ENCODE measurements at regions of chr3 and their contacts with region 1.

Region 1: GRCh38 chr3:118884748-118885206 is 149.9 kb downstream of the IGSF11 start:
- DNase-seq: peak; percentile 71
- H3K4me3 Mint-ChIP-seq: no peak overlapping the region
- H3K27ac Mint-ChIP-seq: no peak overlapping the region
- H3K4me1 Mint-ChIP-seq: no peaks in the 10 kb centered on the region
- H3K27me3 Mint-ChIP-seq: peaks cover 61% of the 10 kb centered on the region
- CTCF ChIP-seq: peak; percentile 92

Region 2: DNA sequence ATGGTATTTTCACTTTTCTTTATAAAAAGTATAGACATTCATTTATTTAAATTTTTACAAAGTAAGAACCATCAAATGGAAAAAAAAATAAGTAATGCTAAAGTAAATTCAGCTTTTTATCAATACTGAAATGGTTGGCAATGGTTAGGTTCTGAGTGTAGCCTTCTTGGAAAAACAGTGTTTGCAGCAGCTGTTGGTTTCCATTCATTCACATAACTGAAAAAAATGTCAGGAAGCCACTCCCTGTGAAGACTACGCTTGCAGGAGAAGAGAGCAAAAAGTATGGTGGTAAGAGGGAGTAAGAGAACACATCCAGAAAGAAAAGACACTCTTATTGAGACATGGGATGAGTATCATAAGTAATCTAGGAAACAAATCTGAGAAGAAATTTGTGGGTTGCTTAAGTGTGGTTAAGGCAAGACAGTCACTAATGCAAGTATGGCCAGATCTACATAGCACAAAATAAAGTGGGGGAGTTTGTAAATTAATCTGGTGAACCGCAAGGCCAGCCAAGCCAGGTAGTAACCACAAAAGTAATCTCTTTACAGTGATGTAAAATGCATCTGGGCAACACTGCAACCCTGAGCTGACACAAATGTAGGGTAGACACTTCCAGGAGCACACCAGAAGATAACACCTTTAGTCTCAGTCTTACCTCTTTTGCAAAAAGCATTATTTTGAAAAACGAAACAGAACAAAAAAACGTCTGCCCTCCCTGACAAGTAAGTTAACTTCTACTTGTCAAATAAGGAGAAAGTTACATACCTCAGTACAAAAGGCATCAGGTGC is 16.2 kb after region 1 on chr3:
- CTCF ChIA-PET with region 1: interaction called, 52 read pairs
- POLR2A ChIA-PET with region 1: interaction called, 4 read pairs
- intact Hi-C with region 1: no loop called
- DNase-seq: no peak
- H3K4me3 Mint-ChIP-seq: no peak overlapping the region
- H3K27ac Mint-ChIP-seq: no peak overlapping the region
- H3K4me1 Mint-ChIP-seq: no peaks in the 10 kb centered on the region
- H3K27me3 Mint-ChIP-seq: peaks cover 75% of the 10 kb centered on the region
- CTCF ChIP-seq: no peak

Region 3: GRCh38 chr3:118987477-118987876 is 102.7 kb after region 1 on chr3:
- CTCF ChIA-PET with region 1: interaction called, 16 read pairs
- POLR2A ChIA-PET with region 1: no interaction called
- intact Hi-C with region 1: no loop called
- DNase-seq: peak; percentile 24
- H3K4me3 Mint-ChIP-seq: no peak overlapping the region
- H3K27ac Mint-ChIP-seq: no peak overlapping the region
- H3K4me1 Mint-ChIP-seq: no peaks in the 10 kb centered on the region
- H3K27me3 Mint-ChIP-seq: peaks cover 43% of the 10 kb centered on the region
- CTCF ChIP-seq: no peak

Region 4: GRCh38 chr3:119042164-119042563 is 157.4 kb after region 1 on chr3:
- CTCF ChIA-PET with region 1: interaction called, 325 read pairs
- POLR2A ChIA-PET with region 1: no interaction called
- intact Hi-C with region 1: no loop called
- DNase-seq: no peak
- H3K4me3 Mint-ChIP-seq: no peak overlapping the region
- H3K27ac Mint-ChIP-seq: no peak overlapping the region
- H3K4me1 Mint-ChIP-seq: no peaks in the 10 kb centered on the region
- H3K27me3 Mint-ChIP-seq: peaks cover 25% of the 10 kb centered on the region
- CTCF ChIP-seq: no peak

Region 5: GRCh38 chr3:119098619-119099222 is 213.9 kb after region 1 on chr3:
- CTCF ChIA-PET with region 1: interaction called, 564 read pairs
- POLR2A ChIA-PET with region 1: interaction called, 7 read pairs
- intact Hi-C with region 1: loop called (anchors 1 kb)
- DNase-seq: peak; percentile 56
- H3K4me3 Mint-ChIP-seq: no peak overlapping the region
- H3K27ac Mint-ChIP-seq: no peak overlapping the region
- H3K4me1 Mint-ChIP-seq: peaks cover 10% of the 10 kb centered on the region
- H3K27me3 Mint-ChIP-seq: no peaks in the 10 kb centered on the region
- CTCF ChIP-seq: peak; percentile 85

Region 6: GRCh38 chr3:119240591-119241434 is 356.0 kb after region 1 on chr3 and contains the start of gene B4GALT4:
- CTCF ChIA-PET with region 1: interaction called, 70 read pairs
- POLR2A ChIA-PET with region 1: no interaction called
- intact Hi-C with region 1: loop called (anchors 1 kb)
- DNase-seq: peak; percentile 89
- H3K4me3 Mint-ChIP-seq: peak within 1 kb of the TSS; percentile 77
- H3K27ac Mint-ChIP-seq: peak within 1 kb of the TSS; percentile 87
- H3K4me1 Mint-ChIP-seq: peaks cover 6% of the 10 kb centered on the region
- H3K27me3 Mint-ChIP-seq: no peaks in the 10 kb centered on the region
- CTCF ChIP-seq: no peak
- total RNA-seq, gene B4GALT4: 18.3 and 20.4 TPM in 2 replicates

Measured in MCF 10A (cell line).